ENCODE measurements at regions of chr11 and their contacts with region 1.

Region 1: GRCh38 chr11:65274735-65275682 is 13.2 kb downstream of the POLA2 start:
- DNase-seq: peak; percentile 88
- H3K4me3 ChIP-seq: no peak overlapping the region
- H3K27ac ChIP-seq: peak overlapping the region; percentile 64
- H3K4me1 ChIP-seq: no peaks in the 10 kb centered on the region
- H3K27me3 ChIP-seq: no peaks in the 10 kb centered on the region
- CTCF ChIP-seq: peak; percentile 61

Region 2: DNA sequence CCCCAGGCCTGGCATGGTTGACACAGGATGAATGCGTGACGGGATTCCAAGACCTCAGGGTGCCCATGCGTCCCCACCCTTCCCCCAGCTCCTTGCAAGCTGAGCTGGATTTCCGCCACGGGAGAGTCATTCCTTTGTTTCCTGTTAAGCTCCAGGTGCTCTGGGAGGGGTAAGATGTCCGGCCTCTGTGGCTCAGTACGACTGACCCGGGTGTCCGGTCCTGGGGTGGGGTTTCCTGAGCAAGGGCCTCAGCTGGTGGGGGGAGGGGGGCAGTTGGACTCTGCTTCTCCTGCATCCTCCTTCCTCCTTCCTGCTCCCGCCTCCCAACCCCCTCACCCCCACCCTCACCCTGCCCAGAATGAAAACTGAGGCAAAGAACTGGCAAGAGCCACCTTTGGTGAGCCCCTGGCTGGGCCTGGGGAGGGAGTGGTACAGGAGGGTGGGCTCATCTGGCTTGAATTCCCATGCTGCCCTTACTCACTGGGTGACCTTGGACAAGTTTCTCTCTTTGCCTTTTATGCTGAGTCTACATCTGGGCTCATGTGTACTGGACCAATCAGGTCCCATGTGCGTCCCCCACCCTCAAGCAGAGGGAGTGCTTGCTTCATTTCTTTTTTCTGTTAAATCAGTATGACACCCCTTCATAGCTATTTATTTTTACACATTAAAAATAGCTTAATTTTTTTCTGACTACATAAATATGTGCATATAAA is 42.2 kb after region 1 on chr11:
- intact Hi-C with region 1: loop called (anchors 2 kb)
- DNase-seq: peak; percentile 92
- H3K4me3 ChIP-seq: peak overlapping the region; percentile 58
- H3K27ac ChIP-seq: peak overlapping the region; percentile 89
- H3K4me1 ChIP-seq: peaks cover 7% of the 10 kb centered on the region
- H3K27me3 ChIP-seq: no peaks in the 10 kb centered on the region
- CTCF ChIP-seq: no peak

Region 3: DNA sequence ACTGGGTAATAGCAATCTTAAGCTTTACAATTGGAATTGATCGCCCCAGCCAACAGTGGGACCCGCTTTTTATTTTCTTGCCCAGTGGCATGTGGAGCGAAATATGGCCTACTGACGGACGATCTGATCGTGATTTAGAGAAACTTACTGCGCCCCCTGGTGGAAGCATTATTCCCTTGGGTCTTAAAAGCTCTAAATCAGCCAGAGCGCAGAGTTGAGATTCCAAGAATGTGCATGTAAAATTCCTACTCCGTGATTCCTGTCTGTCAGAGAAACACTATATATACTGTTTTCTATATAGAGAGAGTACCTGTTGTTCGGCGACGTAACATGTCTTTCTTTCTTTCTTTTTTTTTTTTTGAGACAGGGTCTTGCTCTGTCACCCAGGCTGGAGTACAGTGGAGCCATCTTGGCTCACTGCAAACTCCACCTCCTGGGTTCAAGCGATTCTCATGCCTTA is 55.0 kb after region 1 on chr11:
- intact Hi-C with region 1: loop called (anchors 2 kb)
- DNase-seq: peak; percentile 96
- H3K4me3 ChIP-seq: no peak overlapping the region
- H3K27ac ChIP-seq: no peak overlapping the region
- H3K4me1 ChIP-seq: no peaks in the 10 kb centered on the region
- H3K27me3 ChIP-seq: no peaks in the 10 kb centered on the region
- CTCF ChIP-seq: peak; percentile 76

Region 4: DNA sequence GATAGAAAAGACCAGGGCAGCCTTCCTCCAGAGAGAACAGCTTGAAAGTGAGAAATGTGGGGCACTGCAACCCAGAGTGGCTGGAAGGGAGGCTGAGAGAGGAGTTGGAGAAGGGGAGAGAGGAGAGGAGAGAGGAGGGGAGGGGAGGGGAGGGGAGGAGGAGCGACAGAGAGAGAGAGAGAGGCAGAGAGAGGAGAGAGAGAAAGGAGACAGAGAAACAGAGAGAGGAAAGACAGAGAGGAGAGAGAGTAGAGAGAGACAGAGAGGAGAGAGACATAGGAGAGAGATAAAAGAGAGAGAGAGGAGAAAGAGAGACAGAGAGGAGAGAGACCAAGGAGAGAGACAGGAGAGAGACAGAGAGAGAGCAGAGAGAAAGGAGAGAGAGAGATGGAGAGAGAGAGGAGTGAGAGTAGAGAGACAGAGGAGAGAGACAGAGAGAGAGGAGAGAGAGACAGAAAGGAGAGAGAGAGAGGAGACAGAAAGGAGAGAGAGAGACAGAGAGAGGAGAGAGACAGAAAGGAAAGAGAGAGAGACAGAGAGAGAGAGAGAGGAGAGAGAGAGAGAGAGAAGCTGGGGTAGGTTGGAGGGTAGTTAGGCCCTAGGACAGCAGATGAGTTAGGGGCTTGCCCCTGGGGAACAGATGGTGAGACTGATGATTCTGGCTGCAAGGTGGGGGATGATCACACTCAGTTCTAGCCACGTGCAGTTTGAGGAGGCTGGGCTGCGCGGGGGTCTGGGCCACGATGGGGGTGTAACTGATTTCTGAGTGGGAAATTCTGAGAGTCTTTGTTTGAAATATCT is 241.3 kb after region 1 on chr11:
- intact Hi-C with region 1: loop called (anchors 10 kb)
- DNase-seq: no peak
- H3K4me3 ChIP-seq: no peak overlapping the region
- H3K27ac ChIP-seq: no peak overlapping the region
- H3K4me1 ChIP-seq: no peaks in the 10 kb centered on the region
- H3K27me3 ChIP-seq: no peaks in the 10 kb centered on the region
- CTCF ChIP-seq: no peak

Measured in colonic mucosa (tissue), 4 donors.